ENCODE measurements at regions of chrX and their contacts with region 1.

Region 1: DNA sequence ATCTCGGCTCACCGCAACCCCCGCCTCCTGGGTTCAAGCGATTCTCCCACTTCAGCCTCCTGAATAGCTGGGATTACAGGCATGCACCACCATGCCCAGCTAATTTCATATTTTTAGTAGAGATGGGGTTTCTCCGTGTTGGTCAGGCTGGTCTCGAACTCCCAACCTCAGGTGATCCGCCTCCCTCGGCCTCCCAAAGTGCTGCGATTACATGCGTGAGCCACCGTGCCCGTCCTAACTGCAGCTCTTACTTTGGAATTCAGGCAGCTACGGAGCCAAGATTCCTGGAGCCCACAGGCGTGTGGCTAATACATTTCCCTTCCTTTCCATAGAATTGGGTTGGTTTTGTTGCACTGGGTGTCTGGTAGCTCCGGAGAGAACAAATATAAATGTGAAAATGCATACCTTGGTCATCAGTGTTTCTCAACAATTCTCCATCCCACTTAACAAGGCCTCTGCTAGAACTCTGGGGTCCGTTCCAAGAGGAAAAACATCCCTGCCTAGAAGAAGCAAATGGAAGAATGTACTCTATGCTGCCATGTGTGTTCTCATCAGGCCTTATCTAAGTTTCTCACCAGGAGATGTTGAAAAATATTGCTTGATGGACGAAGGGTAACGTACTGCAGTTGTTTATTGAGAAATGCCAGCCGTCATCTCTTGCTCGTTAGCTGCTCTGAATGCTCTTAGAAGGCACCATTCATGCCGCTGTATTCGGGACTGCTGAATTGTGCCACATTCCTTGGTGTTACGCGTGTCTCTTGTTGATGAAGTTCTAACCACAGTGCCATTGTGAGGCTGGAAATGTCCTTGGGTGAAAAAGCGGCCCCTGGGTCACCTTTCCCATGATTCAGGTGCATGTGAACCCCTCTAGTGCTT is 50.6 kb upstream of the CD99 start:
- DNase-seq: no peak
- H3K4me3 ChIP-seq: no peak overlapping the region
- H3K27ac ChIP-seq: no peak overlapping the region
- H3K4me1 ChIP-seq: peaks cover 4% of the 10 kb centered on the region; the same call in 1 of the 2 replicates
- H3K27me3 ChIP-seq: no peaks in the 10 kb centered on the region

Region 2: GRCh38 chrX:2451501-2452316 is 188.8 kb before region 1 on chrX:
- in situ Hi-C with region 1: no loop called
- DNase-seq: peak; percentile 43
- H3K4me3 ChIP-seq: no peak overlapping the region
- H3K27ac ChIP-seq: no peak overlapping the region
- H3K4me1 ChIP-seq: no peaks in the 10 kb centered on the region
- H3K27me3 ChIP-seq: no peaks in the 10 kb centered on the region

Region 3: GRCh38 chrX:2819345-2820135 is 179.0 kb after region 1 on chrX:
- in situ Hi-C with region 1: loop called (anchors 10 kb)
- DNase-seq: peak; percentile 57
- H3K4me3 ChIP-seq: no peak overlapping the region
- H3K27ac ChIP-seq: no peak overlapping the region
- H3K4me1 ChIP-seq: no peaks in the 10 kb centered on the region
- H3K27me3 ChIP-seq: no peaks in the 10 kb centered on the region